ENCODE measurements at regions of chr9 and their contacts with region 1.

Region 1: DNA sequence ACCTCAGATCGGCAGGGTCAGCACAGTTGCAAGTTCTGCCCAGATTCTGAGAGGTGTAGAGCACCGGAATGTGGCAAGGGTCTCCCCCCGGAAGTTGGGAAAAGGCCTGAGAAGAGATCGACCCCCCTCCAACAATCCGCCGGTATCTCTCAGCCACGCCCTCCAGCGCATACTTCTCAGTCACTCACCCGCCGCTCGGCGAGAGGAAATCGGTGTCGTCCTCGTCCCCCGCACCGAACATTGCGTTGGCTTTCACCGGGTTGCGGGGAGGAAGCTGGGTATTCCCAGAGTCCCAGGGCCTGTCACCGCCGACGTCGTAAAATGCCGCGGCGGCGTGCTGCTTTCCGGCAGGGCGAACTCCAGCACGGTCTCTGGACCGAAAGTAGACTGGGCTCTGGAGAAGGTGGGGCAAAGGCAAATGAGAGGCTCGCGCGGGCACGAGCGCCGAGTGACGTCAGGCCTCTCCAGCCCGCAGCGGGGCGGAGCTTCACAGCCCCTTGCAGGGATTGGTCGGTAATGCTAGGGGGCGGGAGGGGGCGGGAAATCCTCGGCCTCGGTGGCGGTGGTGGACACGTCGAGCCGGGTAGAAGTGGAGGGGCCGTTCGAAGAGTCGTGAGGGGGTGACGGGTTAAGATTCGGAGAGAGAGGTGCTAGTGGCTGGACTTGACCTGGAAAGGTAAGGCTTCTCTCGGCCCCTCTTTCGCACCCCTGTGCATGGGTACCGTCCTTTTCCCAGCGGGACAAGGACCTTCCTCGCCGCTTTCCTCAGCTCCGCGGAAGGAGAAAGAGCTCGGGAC is at the starts of genes FKBP15 and SLC31A1:
- DNase-seq: peak; percentile 96 to 99
- ATAC-seq: peak; percentile 91 to 99 (median 95)
- H3K4me3 ChIP-seq: peak within 1 kb of the TSS; percentile 96
- H3K4me3 Mint-ChIP-seq: peak within 1 kb of the TSS; percentile 97
- H3K27ac ChIP-seq: peak within 1 kb of the TSS; percentile 92
- H3K27ac Mint-ChIP-seq: peak within 1 kb of the TSS; percentile 82 to 92
- H3K4me1 ChIP-seq: peaks cover 21% of the 10 kb centered on the region
- H3K4me1 Mint-ChIP-seq: peaks cover 44 to 52% of the 10 kb centered on the region in 2 donors
- H3K27me3 ChIP-seq: no peaks in the 10 kb centered on the region
- H3K27me3 Mint-ChIP-seq: no peaks in the 10 kb centered on the region
- CTCF ChIP-seq: no peak
- total RNA-seq, gene FKBP15: 35.0 to 37.9 (median 35.9) TPM
- total RNA-seq, gene SLC31A1: 7.9 to 27.8 (median 11.8) TPM

Region 2: GRCh38 chr9:113150670-113151611 is 70.3 kb before region 1 on chr9 and contains the start of gene SLC31A2:
- intact Hi-C with region 1: loop called (anchors 5 kb)
- DNase-seq: peak; percentile 77 to 88
- ATAC-seq: peak; percentile 89 to 95 (median 92)
- H3K4me3 ChIP-seq: peak within 1 kb of the TSS; percentile 83
- H3K4me3 Mint-ChIP-seq: peak within 1 kb of the TSS; percentile 86
- H3K27ac ChIP-seq: peak within 1 kb of the TSS; percentile 53
- H3K27ac Mint-ChIP-seq: peak within 1 kb of the TSS; percentile 62 to 81
- H3K4me1 ChIP-seq: peaks cover 15% of the 10 kb centered on the region
- H3K4me1 Mint-ChIP-seq: peaks cover 22 to 28% of the 10 kb centered on the region in 2 donors
- H3K27me3 ChIP-seq: no peaks in the 10 kb centered on the region
- H3K27me3 Mint-ChIP-seq: peaks cover 4 to 7% of the 10 kb centered on the region in 2 donors
- CTCF ChIP-seq: peak; percentile 56
- total RNA-seq, gene SLC31A2: 4.9 to 7.9 (median 6.0) TPM

Region 3: DNA sequence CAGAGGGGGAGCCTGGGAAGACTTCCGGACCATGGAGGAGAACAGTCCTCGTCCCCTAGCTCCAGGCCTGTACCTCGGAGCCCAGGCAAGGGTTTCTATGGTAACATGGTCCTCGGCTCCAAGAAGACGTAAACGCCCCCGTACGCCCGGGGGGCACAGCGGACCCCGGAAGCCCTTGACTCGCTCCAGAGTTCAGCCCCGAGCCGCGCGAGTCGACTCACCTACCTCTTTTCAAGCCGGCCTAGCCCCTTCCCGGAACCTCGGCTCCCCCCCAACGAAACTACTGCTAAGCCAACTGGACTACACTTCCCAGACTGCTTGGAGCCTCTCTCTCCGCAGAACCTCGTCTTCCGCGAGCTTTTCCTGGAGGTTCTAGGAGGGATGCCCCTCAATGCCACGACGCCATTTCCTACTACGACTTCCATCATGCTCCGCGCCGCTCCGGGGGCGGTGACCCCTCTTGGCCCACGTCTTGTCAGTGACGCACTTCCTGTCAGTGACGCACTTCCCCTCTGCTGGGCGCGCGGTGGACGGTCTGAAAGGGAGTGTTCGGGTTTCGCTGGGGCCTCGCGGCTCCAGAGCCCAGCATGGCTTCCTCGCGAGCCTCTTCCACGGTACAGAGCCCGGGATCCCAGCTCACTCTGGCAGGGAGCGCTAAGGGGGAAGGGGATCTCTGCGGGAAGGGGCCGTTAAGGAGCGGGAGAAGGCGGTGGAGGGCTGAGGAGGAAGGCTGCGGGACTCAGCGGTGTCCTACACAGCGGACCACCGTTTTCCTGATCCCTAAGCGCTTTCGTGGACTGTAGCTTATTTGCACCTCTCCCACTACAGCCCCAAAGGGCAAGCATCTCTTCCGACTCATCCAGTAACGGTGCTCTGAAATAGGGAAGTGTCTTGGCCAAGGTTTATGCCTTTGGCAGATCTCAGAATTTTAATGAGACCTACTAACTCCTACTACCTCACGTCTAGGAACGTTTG is 54.2 kb after region 1 on chr9 and contains the starts of genes CDC26 and PRPF4:
- intact Hi-C with region 1: loop called (anchors 1 kb)
- DNase-seq: peak; percentile 92 to 99
- ATAC-seq: peak; percentile 94 to 99 (median 97)
- H3K4me3 ChIP-seq: peak within 1 kb of the TSS; percentile 89
- H3K4me3 Mint-ChIP-seq: no peak within 1 kb of the TSS
- H3K27ac ChIP-seq: peak within 1 kb of the TSS; percentile 95
- H3K27ac Mint-ChIP-seq: no peak within 1 kb of the TSS
- H3K4me1 ChIP-seq: peaks cover 8% of the 10 kb centered on the region
- H3K4me1 Mint-ChIP-seq: peaks cover 8 to 15% of the 10 kb centered on the region in 2 donors
- H3K27me3 ChIP-seq: no peaks in the 10 kb centered on the region
- H3K27me3 Mint-ChIP-seq: no peaks in the 10 kb centered on the region
- CTCF ChIP-seq: no peak
- total RNA-seq, gene CDC26: 16.8 to 24.8 (median 21.5) TPM
- total RNA-seq, gene PRPF4: 16.9 to 23.2 (median 21.1) TPM